Right ventricle myocardium superior (tissue), 1 donor: ENCODE measurements at regions of chr16 and their contacts with region 1.

Region 1: GRCh38 chr16:57084257-57084770 is 8.1 kb upstream of the CPNE2 start:
- DNase-seq: peak; percentile 75
- ATAC-seq: peak; percentile 87

Region 2: DNA sequence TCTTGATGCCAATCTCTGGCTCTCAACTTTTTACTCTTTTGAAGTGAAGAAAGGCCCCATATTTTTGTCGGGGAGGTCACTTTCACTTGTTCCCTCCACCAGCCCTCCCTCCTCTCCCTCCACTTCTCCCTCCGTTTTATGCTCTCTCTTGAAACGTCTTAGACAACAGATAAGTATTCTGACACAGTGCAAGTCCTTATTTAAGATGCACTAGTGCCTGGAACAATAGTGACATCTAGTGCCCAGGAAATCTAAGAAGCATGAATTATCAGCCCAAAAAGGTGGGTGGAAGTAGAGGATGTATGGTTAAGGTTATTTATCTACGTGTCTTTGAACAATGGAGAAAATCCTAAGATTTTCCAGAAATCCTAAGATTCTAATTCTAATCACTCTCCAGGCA is 83.6 kb after region 1 on chr16:
- intact Hi-C with region 1: loop called (anchors 2 kb)
- DNase-seq: no peak
- ATAC-seq: peak; percentile 82

Region 3: DNA sequence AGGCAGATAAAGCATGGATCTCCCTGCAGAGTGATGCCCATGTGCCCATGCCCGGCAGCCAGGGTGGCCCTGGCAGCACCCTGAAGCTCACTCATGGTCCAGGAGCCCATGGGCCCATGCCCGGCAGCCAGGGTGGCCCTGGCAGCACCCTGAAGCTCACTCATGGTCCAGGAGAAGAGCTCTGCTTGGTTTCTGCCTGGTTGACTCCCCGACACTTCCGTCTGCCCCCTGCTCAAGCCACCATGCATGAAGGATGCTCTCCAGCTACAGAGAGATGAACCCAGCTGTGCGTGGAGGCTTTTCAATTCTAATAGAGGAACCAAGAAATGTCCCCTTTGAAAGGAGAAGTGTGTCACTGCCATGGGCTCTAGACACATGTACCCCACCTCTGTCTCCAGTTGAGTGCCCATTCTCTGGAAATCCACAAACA is 329.0 kb after region 1 on chr16:
- intact Hi-C with region 1: loop called (anchors 10 kb)
- DNase-seq: no peak
- ATAC-seq: no peak